Right cardiac atrium (tissue), 5 donors: ENCODE measurements at regions of chr12 and their contacts with region 1.

Region 1: GRCh38 chr12:8969861-8970412 is 19.4 kb upstream of the KLRG1 start:
- DNase-seq: no peak
- ATAC-seq: no peak
- H3K4me3 ChIP-seq: no peak overlapping the region
- H3K27ac ChIP-seq: no peak overlapping the region
- H3K4me1 ChIP-seq: no peaks in the 10 kb centered on the region
- H3K27me3 ChIP-seq: no peaks in the 10 kb centered on the region

Region 2: GRCh38 chr12:9027161-9028059 is 57.5 kb after region 1 on chr12:
- intact Hi-C with region 1: loop called in 1 of 4 experiments (anchors 10 kb)
- DNase-seq: no peak
- ATAC-seq: no peak
- H3K4me3 ChIP-seq: no peak overlapping the region
- H3K27ac ChIP-seq: no peak overlapping the region
- H3K4me1 ChIP-seq: no peaks in the 10 kb centered on the region
- H3K27me3 ChIP-seq: no peaks in the 10 kb centered on the region